ENCODE measurements at regions of chr18 and their contacts with region 1.

Region 1: DNA sequence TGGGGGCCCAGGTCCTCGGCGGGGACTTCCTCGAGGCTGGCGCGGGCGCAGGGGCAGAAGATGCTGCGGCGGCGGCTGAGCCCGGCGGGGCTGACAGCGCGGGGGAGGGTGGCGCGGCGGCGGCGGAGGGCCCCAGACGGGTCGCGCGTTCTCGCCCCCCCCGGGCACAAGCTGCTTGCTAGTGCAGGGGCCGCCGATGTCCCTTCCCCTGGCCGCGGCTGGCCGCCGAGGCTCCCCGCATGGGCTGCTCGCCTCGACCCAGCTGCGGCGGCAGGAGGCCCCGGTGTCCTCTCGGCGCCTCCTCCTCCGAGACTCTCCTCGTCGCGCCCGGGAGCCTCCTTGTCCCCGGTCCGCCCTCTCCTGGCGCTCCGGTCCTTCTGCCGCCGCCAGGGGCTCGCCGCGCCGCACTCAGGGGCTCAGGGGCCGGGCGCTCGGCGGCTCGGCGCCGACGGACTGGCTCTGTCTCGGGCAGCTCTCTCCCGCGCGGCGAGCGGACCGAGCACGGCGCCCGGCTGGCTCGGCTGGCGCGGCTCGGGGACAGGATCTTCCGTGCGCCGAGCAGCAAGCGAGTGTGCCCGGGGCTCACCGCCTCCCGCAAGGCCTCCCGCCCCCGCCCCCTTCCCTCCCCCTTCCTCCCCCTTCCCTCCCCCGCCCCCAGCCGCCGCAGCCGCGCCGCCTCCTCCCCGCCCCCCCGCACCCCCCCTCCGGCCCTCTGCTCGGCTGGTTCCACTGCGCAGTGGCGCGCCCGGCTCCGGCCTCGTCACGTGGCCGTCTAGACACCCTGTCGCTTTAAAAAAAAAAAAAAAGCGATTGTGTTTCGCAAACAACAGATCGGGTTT is 902 bp upstream of the SMAD7 start:
- DNase-seq: peak; percentile 71 to 86 (median 75)
- H3K4me3 ChIP-seq: peak overlapping the region; percentile 52 to 64
- H3K4me3 Mint-ChIP-seq: peak overlapping the region; percentile 93 to 99 (median 96)
- H3K27ac ChIP-seq: peak overlapping the region; percentile 74
- H3K27ac Mint-ChIP-seq: peak overlapping the region; percentile 95 to 100 (median 98)
- H3K4me1 ChIP-seq: peaks cover 56% of the 10 kb centered on the region
- H3K4me1 Mint-ChIP-seq: peaks cover 38 to 74% (median 42%) of the 10 kb centered on the region in 4 donors
- H3K27me3 ChIP-seq: no peaks in the 10 kb centered on the region
- H3K27me3 Mint-ChIP-seq: no peaks in the 10 kb centered on the region

Region 2: GRCh38 chr18:48777026-48777743 is 174.5 kb before region 1 on chr18:
- CTCF ChIA-PET with region 1: interaction called, 11 read pairs
- POLR2A ChIA-PET with region 1: interaction called, 6 read pairs
- intact Hi-C with region 1: loop called (anchors 1 kb)
- DNase-seq: peak; percentile 64 to 75 (median 70)
- H3K4me3 ChIP-seq: no peak overlapping the region
- H3K4me3 Mint-ChIP-seq: no peak overlapping the region
- H3K27ac ChIP-seq: no peak overlapping the region
- H3K27ac Mint-ChIP-seq: peak overlapping the region in 1 of 7 donors; percentile 74
- H3K4me1 ChIP-seq: peaks cover 10% of the 10 kb centered on the region
- H3K4me1 Mint-ChIP-seq: peaks cover 4 to 18% (median 5%) of the 10 kb centered on the region in 4 donors
- H3K27me3 ChIP-seq: no peaks in the 10 kb centered on the region
- H3K27me3 Mint-ChIP-seq: no peaks in the 10 kb centered on the region

Region 3: GRCh38 chr18:48842259-48843061 is 109.2 kb before region 1 on chr18:
- CTCF ChIA-PET with region 1: no interaction called
- POLR2A ChIA-PET with region 1: interaction called, 15 read pairs
- intact Hi-C with region 1: loop called (anchors 2 kb)
- DNase-seq: peak; percentile 77 to 83 (median 78)
- H3K4me3 ChIP-seq: peak overlapping the region in 1 of 2 donors; percentile 34
- H3K4me3 Mint-ChIP-seq: peak overlapping the region; percentile 43 to 87 (median 74)
- H3K27ac ChIP-seq: peak overlapping the region; percentile 62
- H3K27ac Mint-ChIP-seq: peak overlapping the region; percentile 94 to 99 (median 97)
- H3K4me1 ChIP-seq: peaks cover 85% of the 10 kb centered on the region
- H3K4me1 Mint-ChIP-seq: peaks cover 68 to 84% (median 77%) of the 10 kb centered on the region in 4 donors
- H3K27me3 ChIP-seq: no peaks in the 10 kb centered on the region
- H3K27me3 Mint-ChIP-seq: no peaks in the 10 kb centered on the region

Region 4: DNA sequence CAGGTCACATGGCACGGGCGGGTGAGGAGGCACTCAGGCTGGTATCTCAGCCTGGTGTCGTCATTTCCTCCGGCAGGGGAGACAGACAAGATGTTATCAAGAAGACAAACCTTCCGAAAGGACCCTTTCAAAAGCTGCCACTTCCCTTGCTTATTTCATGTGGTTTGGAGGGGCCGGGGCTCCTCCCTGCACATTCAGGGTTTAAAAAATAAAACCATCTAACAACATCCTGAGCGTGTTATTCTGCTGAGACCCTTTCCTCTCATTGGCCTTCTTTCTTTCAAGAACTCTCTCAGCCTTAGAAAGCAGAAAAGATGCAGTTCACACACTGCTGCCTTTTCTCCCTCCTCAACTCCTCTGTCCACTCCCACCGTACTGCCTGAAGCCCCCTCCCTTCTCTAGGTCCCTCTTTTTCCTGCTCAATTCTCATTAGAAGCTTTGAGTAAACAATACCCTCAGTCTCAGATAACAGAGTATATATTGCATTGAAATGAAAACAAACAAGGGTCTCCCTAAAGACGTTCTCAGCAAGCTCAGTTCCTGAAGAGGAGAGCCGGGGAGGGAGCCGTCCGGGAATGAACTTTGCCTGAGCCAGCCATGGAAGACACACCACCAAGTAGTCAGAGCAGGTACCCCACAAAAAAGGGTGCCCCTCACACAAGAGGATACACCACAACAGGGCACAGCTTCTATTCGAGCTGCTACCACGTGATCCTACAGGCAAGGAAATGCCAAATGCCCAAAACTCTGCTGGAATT is 10.6 kb before region 1 on chr18:
- CTCF ChIA-PET with region 1: interaction called, 16 read pairs
- POLR2A ChIA-PET with region 1: interaction called, 69 read pairs
- intact Hi-C with region 1: loop called (anchors 1 kb)
- DNase-seq: peak; percentile 93 to 97 (median 94)
- H3K4me3 ChIP-seq: peak overlapping the region; percentile 14 to 18
- H3K4me3 Mint-ChIP-seq: peak overlapping the region; percentile 82 to 94 (median 87)
- H3K27ac ChIP-seq: peak overlapping the region; percentile 49
- H3K27ac Mint-ChIP-seq: peak overlapping the region; percentile 89 to 100 (median 98)
- H3K4me1 ChIP-seq: peaks cover 97% of the 10 kb centered on the region
- H3K4me1 Mint-ChIP-seq: peaks cover 76 to 100% (median 87%) of the 10 kb centered on the region in 4 donors
- H3K27me3 ChIP-seq: no peaks in the 10 kb centered on the region
- H3K27me3 Mint-ChIP-seq: no peaks in the 10 kb centered on the region

Region 5: DNA sequence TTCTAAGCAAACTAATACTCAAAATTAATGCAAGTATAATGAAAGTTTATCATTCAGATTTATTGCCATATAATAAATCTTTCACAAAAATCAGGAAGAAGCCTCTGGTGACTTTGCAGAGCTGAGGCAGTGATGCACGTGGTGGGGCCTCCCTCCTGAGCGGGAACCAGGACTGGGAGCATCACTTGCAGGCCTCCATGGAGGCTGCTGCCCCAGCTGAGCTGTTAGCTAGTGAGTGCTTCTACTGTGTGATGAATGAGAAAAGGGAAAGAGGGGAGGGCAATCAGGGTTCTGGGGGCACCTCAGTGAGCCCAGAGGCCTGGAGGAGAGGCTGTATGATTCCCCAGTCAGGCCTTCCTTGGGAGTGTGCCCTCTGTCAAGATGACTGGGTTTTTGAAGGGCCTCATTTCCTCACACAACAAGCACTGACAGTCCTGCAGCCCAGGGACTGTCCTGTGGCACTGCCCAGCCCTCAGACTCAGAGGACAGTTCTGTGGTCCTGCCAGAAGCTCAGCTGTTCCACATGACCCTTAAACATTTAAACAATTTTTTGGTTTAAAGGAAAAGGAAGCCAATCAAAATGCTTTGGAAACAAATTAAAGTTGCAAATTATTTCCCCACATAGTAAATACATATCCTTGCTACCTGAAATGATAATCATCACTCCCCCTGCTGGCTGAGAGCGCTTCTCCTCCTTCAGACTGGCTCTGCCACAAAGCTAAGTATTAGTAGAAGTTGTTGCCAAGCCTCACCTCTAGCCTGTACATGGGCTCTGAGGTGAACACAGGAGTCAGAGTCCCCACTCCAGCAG is 90.0 kb after region 1 on chr18:
- CTCF ChIA-PET with region 1: interaction called, 4 read pairs
- POLR2A ChIA-PET with region 1: no interaction called
- intact Hi-C with region 1: loop called (anchors 5 kb)
- DNase-seq: peak in 4 of 5 donors; percentile 34 to 52 (median 42)
- H3K4me3 ChIP-seq: no peak overlapping the region
- H3K4me3 Mint-ChIP-seq: no peak overlapping the region
- H3K27ac ChIP-seq: no peak overlapping the region
- H3K27ac Mint-ChIP-seq: peak overlapping the region in 1 of 7 donors; percentile 8
- H3K4me1 ChIP-seq: no peaks in the 10 kb centered on the region
- H3K4me1 Mint-ChIP-seq: peaks cover 0 to 6% (median 0%) of the 10 kb centered on the region in 4 donors
- H3K27me3 ChIP-seq: no peaks in the 10 kb centered on the region
- H3K27me3 Mint-ChIP-seq: no peaks in the 10 kb centered on the region

Region 6: GRCh38 chr18:49094979-49095632 is 143.4 kb after region 1 on chr18:
- CTCF ChIA-PET with region 1: no interaction called
- POLR2A ChIA-PET with region 1: no interaction called
- intact Hi-C with region 1: no loop called
- DNase-seq: no peak
- H3K4me3 ChIP-seq: no peak overlapping the region
- H3K4me3 Mint-ChIP-seq: no peak overlapping the region
- H3K27ac ChIP-seq: no peak overlapping the region
- H3K27ac Mint-ChIP-seq: no peak overlapping the region
- H3K4me1 ChIP-seq: no peaks in the 10 kb centered on the region
- H3K4me1 Mint-ChIP-seq: peaks cover 0 to 2% (median under 1%) of the 10 kb centered on the region in 4 donors
- H3K27me3 ChIP-seq: no peaks in the 10 kb centered on the region
- H3K27me3 Mint-ChIP-seq: no peaks in the 10 kb centered on the region

Region 7: DNA sequence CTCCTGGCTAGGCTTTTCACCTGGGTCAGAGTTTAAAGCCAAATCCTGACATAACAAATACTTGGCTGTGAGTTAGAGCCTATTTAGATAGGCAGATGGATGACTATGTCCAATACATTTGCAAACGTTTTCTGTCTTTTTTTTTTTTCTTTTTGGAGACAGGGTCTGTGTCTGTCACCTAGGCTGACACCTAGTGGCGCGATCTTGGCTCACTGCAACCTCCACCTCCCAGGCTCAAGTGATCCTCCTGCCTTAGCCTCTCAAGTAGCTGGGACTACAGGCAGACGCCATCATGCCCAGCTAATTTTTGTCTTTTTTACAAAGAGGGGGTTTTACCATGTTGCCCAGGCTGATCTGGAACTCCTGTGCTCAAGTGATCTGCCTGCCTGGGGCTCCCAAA is 384.0 kb after region 1 on chr18:
- CTCF ChIA-PET with region 1: no interaction called
- POLR2A ChIA-PET with region 1: no interaction called
- intact Hi-C with region 1: no loop called
- DNase-seq: peak in 1 of 5 donors; percentile 1
- H3K4me3 ChIP-seq: no peak overlapping the region
- H3K4me3 Mint-ChIP-seq: no peak overlapping the region
- H3K27ac ChIP-seq: no peak overlapping the region
- H3K27ac Mint-ChIP-seq: no peak overlapping the region
- H3K4me1 ChIP-seq: no peaks in the 10 kb centered on the region
- H3K4me1 Mint-ChIP-seq: peaks cover 8 to 11% (median 9%) of the 10 kb centered on the region in 4 donors
- H3K27me3 ChIP-seq: no peaks in the 10 kb centered on the region
- H3K27me3 Mint-ChIP-seq: no peaks in the 10 kb centered on the region

Region 8: GRCh38 chr18:49813319-49814146 is 861.9 kb after region 1 on chr18 and contains the start of gene ACAA2:
- CTCF ChIA-PET with region 1: no interaction called
- POLR2A ChIA-PET with region 1: no interaction called
- intact Hi-C with region 1: loop called (anchors 10 kb)
- DNase-seq: peak; percentile 68 to 84 (median 70)
- H3K4me3 ChIP-seq: peak within 1 kb of the TSS; percentile 88 to 90
- H3K4me3 Mint-ChIP-seq: peak within 1 kb of the TSS; percentile 95 to 100 (median 96)
- H3K27ac ChIP-seq: peak within 1 kb of the TSS; percentile 80
- H3K27ac Mint-ChIP-seq: peak within 1 kb of the TSS; percentile 91 to 99 (median 97)
- H3K4me1 ChIP-seq: peaks cover 51% of the 10 kb centered on the region
- H3K4me1 Mint-ChIP-seq: peaks cover 39 to 69% (median 53%) of the 10 kb centered on the region in 4 donors
- H3K27me3 ChIP-seq: no peaks in the 10 kb centered on the region
- H3K27me3 Mint-ChIP-seq: no peaks in the 10 kb centered on the region
- total RNA-seq, gene ACAA2: 21.8 to 23.8 TPM